ENCODE measurements at regions of chr12 and their contacts with region 1.

Region 1: GRCh38 chr12:10196210-10196609 is 16.5 kb upstream of the GABARAPL1 start:
- DNase-seq: peak; percentile 94
- H3K4me3 ChIP-seq: peak overlapping the region; percentile 49
- H3K27ac ChIP-seq: peak overlapping the region; percentile 81
- H3K4me1 ChIP-seq: peaks cover 55% of the 10 kb centered on the region
- CTCF ChIP-seq: no peak

Region 2: GRCh38 chr12:9843416-9843815 is 352.8 kb before region 1 on chr12:
- CTCF ChIA-PET with region 1: no interaction called
- POLR2A ChIA-PET with region 1: no interaction called
- intact Hi-C with region 1: no loop called
- DNase-seq: no peak
- H3K4me3 ChIP-seq: no peak overlapping the region
- H3K27ac ChIP-seq: no peak overlapping the region
- H3K4me1 ChIP-seq: no peaks in the 10 kb centered on the region
- CTCF ChIP-seq: no peak

Region 3: DNA sequence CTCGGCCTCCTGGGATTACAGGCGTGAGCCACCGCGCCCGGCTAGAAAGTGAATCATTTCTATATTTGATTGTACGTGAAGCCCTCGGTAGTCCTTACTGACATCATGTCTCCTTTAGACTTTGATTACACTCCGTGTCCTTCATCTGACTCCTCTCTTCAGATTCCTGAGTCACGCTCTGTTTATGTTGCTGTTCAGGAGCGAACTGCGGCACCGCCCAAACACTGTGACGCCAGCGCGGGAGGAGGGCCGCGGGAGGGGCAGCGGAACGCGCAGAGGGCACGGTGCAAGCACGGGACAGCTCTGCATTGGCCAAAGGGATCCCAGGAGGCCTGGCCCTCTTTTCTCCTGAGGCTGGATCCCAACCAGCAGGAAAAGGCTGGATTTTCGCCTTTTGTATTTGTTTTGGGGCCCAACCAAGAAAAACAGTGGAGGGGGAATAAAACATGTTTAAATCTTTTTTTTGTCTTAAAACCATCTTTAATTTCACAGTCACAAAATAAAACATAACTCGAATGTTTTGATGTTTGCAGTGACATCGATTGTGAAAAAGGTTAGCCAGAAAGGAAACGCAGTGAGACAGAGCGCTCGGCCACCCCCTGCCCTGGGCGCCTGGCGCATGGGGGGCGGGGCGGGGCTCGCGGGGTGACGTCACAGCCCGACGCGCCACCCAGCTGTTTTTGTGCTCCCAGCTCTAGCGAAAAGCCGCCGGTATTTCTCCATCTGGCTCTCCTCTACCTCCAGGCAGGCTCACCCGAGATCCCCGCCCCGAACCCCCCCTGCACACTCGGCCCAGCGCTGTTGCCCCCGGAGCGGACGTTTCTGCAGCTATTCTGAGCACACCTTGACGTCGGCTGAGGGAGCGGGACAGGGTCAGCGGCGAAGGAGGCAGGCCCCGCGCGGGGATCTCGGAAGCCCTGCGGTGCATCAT is 16.3 kb after region 1 on chr12 and contains the start of gene GABARAPL1:
- CTCF ChIA-PET with region 1: no interaction called
- POLR2A ChIA-PET with region 1: interaction called, 59 read pairs
- intact Hi-C with region 1: no loop called
- DNase-seq: peak; percentile 79
- H3K4me3 ChIP-seq: peak within 1 kb of the TSS; percentile 98
- H3K27ac ChIP-seq: peak within 1 kb of the TSS; percentile 86
- H3K4me1 ChIP-seq: peaks cover 21% of the 10 kb centered on the region
- CTCF ChIP-seq: no peak
- total RNA-seq, gene GABARAPL1: 34.2 and 40.7 TPM in 2 replicates

Measured in OCI-LY7 (cell line).